Sigmoid colon (tissue), 7 donors: ENCODE measurements at regions of chr17 and their contacts with region 1.

Region 1: GRCh38 chr17:38729886-38730525 is at the start of gene CISD3:
- DNase-seq: peak; percentile 93
- H3K4me3 ChIP-seq: peak within 1 kb of the TSS; percentile 63 to 84 (median 80)
- H3K27ac ChIP-seq: peak within 1 kb of the TSS; percentile 87 to 94 (median 90)
- H3K4me1 ChIP-seq: peaks cover 2 to 37% (median 36%) of the 10 kb centered on the region in 4 donors
- H3K27me3 ChIP-seq: no peaks in the 10 kb centered on the region
- CTCF ChIP-seq: peak; percentile 30 to 71 (median 37)
- EP300 ChIP-seq: no peak
- POLR2A ChIP-seq: no peak
- total RNA-seq, gene CISD3: 9.2 to 19.3 (median 14.6) TPM

Region 2: GRCh38 chr17:38693700-38694329 is 36.2 kb before region 1 on chr17:
- intact Hi-C with region 1: loop called (anchors 5 kb)
- DNase-seq: peak; percentile 99
- H3K4me3 ChIP-seq: no peak overlapping the region
- H3K27ac ChIP-seq: peak overlapping the region; percentile 79 to 96 (median 86)
- H3K4me1 ChIP-seq: peaks cover 0 to 25% (median 18%) of the 10 kb centered on the region in 4 donors
- H3K27me3 ChIP-seq: no peaks in the 10 kb centered on the region
- CTCF ChIP-seq: no peak
- EP300 ChIP-seq: peak in 2 of 4 donors; percentile 9 to 82
- POLR2A ChIP-seq: peak in 1 of 2 donors; percentile 8

Region 3: GRCh38 chr17:38704645-38705522 is 25.1 kb before region 1 on chr17 and contains the start of gene MLLT6:
- intact Hi-C with region 1: loop called (anchors 2 kb)
- DNase-seq: peak; percentile 91
- H3K4me3 ChIP-seq: peak within 1 kb of the TSS; percentile 81 to 98 (median 96)
- H3K27ac ChIP-seq: peak within 1 kb of the TSS; percentile 92 to 99 (median 96)
- H3K4me1 ChIP-seq: peaks cover 0 to 53% (median 33%) of the 10 kb centered on the region in 4 donors
- H3K27me3 ChIP-seq: no peaks in the 10 kb centered on the region
- CTCF ChIP-seq: no peak
- EP300 ChIP-seq: no peak
- POLR2A ChIP-seq: no peak
- total RNA-seq, gene MLLT6: 48.9 to 90.3 (median 69.9) TPM

Region 4: DNA sequence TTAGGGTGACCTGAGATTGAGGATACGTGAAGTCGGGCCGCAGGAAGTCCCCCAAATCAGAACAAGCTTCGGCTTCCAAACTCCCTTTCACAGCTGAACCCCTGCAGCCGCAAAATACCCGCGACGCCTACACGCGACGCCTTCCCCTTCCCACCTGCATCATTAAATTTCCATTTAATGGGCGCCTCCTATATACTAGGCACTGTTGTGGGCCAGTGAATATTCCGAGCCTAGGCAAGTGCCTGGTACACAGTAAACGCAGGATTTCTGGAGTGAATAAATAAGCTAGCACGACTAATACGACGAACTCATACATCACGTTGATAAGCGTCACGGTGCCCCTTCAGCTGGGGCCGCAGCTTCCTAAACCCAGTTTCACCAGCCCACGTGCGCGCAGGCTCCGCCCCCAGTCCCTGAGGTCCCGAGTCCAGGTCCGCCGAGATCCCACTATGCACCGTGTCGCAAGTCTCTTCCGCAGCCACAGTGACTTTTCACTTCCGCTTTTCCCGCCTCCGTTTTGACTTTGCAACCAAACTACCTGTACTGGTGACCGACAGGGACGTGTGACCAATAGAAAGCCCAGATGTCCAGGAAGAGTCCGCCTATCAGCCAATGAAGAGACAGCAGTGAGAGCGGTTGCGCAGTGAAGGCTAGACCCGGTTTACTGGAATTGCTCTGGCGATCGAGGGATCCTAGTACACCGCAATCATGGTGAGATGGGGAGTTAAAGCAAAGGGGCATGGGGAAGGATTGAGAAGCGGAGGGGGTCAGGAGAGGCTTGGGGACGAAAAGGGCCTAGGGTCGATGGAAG is 22.3 kb after region 1 on chr17 and contains the start of gene PSMB3:
- intact Hi-C with region 1: loop called (anchors 2 kb)
- DNase-seq: peak; percentile 99
- H3K4me3 ChIP-seq: peak within 1 kb of the TSS; percentile 78 to 92 (median 86)
- H3K27ac ChIP-seq: peak within 1 kb of the TSS; percentile 86 to 94 (median 89)
- H3K4me1 ChIP-seq: peaks cover 0 to 57% (median 55%) of the 10 kb centered on the region in 4 donors
- H3K27me3 ChIP-seq: peaks cover 0 to 24% (median 0%) of the 10 kb centered on the region in 3 donors
- CTCF ChIP-seq: no peak
- EP300 ChIP-seq: no peak
- POLR2A ChIP-seq: peak in 1 of 2 donors; percentile 21
- total RNA-seq, gene PSMB3: 135 to 198 (median 153) TPM

Region 5: DNA sequence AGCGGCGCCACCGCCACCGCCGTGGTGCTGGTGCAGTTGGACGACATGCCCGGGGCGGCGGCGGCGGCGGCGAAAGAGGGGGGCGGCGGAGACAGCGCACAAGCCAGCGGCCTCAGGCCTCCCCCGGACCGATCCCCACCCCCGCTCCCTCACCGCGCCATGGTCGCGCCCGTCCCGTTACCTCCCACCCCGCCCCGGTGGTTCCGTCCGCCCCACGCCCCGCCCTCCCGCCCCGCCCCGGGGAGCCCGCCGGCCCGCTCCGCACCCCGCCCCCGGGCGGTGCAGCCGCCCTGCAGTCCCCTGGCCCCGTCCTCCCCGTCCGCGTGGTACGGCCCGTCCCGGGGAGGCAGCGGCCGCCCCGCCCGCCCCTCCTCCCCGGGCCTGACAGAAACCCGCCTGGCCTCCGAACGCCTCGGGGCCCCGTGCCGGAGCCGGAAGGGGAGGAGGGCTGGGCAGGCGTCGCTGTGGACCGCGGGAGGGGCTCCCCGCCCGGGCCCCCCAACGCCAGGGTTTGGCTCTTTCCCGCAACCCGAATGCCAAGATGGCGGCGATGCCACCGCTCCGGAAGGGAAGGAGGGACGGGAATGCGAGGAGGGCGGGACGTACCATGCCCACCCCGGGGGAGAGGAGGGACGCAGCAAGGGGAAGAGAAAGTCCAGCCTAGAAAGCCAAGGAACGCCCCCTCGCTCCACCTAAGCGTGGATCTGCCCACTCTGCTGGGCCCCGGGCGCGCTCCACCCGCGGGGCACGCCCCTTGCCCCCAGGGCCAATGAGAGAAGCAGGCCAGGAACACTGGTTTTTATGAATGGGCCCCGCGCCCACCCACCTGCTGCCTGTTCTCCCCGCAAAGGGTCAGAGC is 69.6 kb after region 1 on chr17 and contains the start of gene PIP4K2B:
- intact Hi-C with region 1: loop called (anchors 1 kb)
- DNase-seq: peak; percentile 99
- H3K4me3 ChIP-seq: peak within 1 kb of the TSS; percentile 56 to 96 (median 76)
- H3K27ac ChIP-seq: peak within 1 kb of the TSS; percentile 99 to 100 (median 100)
- H3K4me1 ChIP-seq: peaks cover 0 to 38% (median 27%) of the 10 kb centered on the region in 4 donors
- H3K27me3 ChIP-seq: no peaks in the 10 kb centered on the region
- CTCF ChIP-seq: no peak
- EP300 ChIP-seq: no peak
- POLR2A ChIP-seq: no peak
- total RNA-seq, gene PIP4K2B: 44.1 to 50.1 (median 44.6) TPM